Mammary epithelial cell (primary cell): ENCODE measurements at regions of chr22 and their contacts with region 1.

Region 1: GRCh38 chr22:19568337-19569275 is 44.4 kb upstream of the CLDN5 start:
- DNase-seq: peak; percentile 91
- H3K4me3 ChIP-seq: no peak overlapping the region
- H3K27ac ChIP-seq: peak overlapping the region; percentile 61
- H3K4me1 ChIP-seq: peaks cover 36% of the 10 kb centered on the region
- H3K27me3 ChIP-seq: no peaks in the 10 kb centered on the region
- CTCF ChIP-seq: no peak

Region 2: GRCh38 chr22:19514831-19515565 is 53.6 kb before region 1 on chr22:
- CTCF ChIA-PET with region 1: no interaction called
- dilution Hi-C with region 1: no loop called
- in situ Hi-C with region 1: no loop called
- intact Hi-C with region 1: loop called (anchors 5 kb)
- DNase-seq: peak; percentile 18
- H3K4me3 ChIP-seq: no peak overlapping the region
- H3K27ac ChIP-seq: no peak overlapping the region
- H3K4me1 ChIP-seq: peaks cover 18% of the 10 kb centered on the region
- H3K27me3 ChIP-seq: no peaks in the 10 kb centered on the region
- CTCF ChIP-seq: no peak

Region 3: GRCh38 chr22:19535001-19535400 is 33.6 kb before region 1 on chr22:
- CTCF ChIA-PET with region 1: no interaction called
- dilution Hi-C with region 1: no loop called
- in situ Hi-C with region 1: no loop called
- intact Hi-C with region 1: no loop called
- DNase-seq: no peak
- H3K4me3 ChIP-seq: no peak overlapping the region
- H3K27ac ChIP-seq: no peak overlapping the region
- H3K4me1 ChIP-seq: no peaks in the 10 kb centered on the region
- H3K27me3 ChIP-seq: no peaks in the 10 kb centered on the region
- CTCF ChIP-seq: no peak